ENCODE measurements at regions of chr14 and their contacts with region 1.

Region 1: DNA sequence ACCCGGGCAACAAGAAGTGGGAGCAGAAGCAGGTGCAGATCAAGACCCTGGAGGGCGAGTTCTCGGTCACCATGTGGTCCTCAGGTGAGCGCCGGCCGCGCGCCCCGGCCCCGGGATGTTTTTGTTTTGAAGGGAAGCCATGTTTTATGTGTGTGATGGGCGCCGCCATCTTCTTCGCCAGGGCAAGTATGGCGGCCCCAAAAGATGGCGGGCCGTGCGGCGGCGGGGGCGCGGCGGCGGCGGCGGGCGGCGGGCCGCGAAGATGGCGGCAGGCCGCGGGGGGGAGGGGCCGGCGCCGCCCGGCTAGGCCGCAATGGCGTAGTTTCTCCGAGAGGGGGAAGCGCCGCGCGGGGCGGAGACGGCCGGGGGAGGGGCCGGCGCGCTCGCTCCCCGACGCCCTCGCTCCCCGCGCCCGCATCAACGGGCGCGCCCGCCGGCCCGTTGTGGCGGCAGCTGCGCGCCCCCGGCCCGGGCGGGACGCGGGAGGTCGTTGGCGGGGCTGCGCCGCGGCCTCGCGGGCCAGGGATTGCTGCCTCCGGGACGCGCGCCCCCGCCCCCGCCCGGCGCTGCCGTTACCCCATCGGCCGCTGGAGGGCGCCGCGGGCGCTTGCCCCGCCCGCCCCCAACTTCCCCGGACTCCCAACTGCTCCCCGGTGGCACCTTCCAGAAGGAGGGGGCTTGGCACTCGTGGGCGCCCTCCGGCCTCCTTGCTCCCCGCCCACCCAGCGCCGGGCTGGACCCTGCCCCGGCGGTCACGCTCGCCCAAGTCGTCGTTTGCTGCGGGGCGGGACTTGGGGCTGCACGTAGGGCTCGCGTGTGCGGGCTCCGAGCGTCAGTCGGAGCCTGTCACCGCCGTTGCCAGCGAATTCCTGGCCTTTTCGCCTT is 1.1 kb downstream of the YY1 start:
- DNase-seq: peak; percentile 64
- H3K4me3 ChIP-seq: peak overlapping the region; percentile 97
- CTCF ChIP-seq: peak; percentile 54

Region 2: GRCh38 chr14:100221533-100222223 is 18.4 kb before region 1 on chr14:
- CTCF ChIA-PET with region 1: interaction called, 53 read pairs
- POLR2A ChIA-PET with region 1: no interaction called
- DNase-seq: peak; percentile 9
- H3K4me3 ChIP-seq: peak overlapping the region; percentile 55
- CTCF ChIP-seq: no peak

Region 3: DNA sequence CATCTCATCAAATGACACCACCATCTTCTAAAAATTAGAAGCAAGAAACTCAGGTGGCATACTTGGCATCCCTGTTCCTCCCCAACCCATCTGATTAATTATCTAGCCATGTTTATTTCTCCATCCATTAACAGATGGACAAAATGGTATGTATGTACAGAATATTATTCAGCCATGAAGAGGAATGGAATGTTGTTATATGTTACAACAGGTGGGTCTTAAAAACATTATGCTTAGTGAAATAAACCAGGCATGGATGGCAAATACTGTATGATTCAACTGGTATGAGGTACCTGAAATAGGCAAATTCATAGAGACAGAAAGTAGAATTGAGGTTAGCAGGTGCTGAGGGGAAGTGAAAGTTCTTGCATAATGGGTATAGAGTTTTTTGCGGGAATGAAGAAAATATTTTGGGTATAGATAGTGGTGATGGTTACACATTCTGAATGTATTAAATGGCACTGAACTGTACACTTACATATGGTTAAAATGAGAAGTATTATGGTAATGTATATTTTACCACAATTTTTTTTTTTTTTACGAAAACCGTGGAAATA is 16.3 kb after region 1 on chr14:
- CTCF ChIA-PET with region 1: interaction called, 17 read pairs
- POLR2A ChIA-PET with region 1: no interaction called
- DNase-seq: no peak
- H3K4me3 ChIP-seq: no peak overlapping the region
- CTCF ChIP-seq: no peak

Region 4: GRCh38 chr14:100271247-100271939 is 31.3 kb after region 1 on chr14:
- CTCF ChIA-PET with region 1: interaction called, 11 read pairs
- POLR2A ChIA-PET with region 1: no interaction called
- DNase-seq: no peak
- H3K4me3 ChIP-seq: no peak overlapping the region
- CTCF ChIP-seq: no peak

Region 5: DNA sequence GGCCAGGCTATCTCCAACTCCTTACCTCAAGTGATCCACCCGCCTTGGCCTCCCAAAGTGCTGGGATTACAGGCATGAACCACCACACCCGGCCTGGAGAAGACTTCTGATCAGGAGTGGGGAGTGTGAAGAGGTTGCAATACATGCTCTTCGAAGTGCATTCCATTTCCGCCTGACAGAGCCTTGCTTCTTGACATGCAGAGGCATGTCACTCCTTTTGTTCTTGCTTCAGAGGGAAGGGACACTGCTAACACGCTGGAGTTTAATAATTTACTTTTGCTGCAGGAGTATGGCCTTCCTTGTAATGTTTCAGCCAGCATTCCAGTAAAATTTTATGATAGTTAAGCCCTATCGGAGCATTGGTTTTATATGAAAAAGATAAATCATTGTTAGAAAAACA is 158.0 kb after region 1 on chr14:
- CTCF ChIA-PET with region 1: no interaction called
- POLR2A ChIA-PET with region 1: no interaction called
- DNase-seq: no peak
- H3K4me3 ChIP-seq: no peak overlapping the region
- CTCF ChIP-seq: no peak